Left ventricle myocardium superior (tissue), 1 donor: ENCODE measurements at regions of chr11 and their contacts with region 1.

Region 1: GRCh38 chr11:41461057-41461681 is 1.7 kb upstream of the LRRC4C start:
- DNase-seq: no peak
- ATAC-seq: no peak

Region 2: DNA sequence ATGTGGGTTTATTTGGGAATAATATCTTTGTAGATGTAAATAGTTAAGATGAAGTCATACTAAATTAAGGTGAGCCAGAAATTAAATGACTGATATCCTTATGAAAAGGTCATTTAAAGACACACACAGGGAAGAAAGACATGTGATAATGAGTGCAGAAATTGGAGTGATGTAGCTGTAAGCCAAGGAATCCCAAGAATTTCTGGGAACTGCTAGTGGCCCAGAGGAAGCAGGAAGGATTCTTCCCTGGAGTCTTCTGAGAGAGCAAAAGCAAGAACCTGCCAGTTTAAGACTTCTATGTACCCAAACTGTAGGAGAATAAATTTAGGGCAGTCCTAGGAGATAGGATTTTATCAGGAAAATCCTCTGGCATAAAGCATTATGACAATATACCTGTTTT is 68.6 kb before region 1 on chr11:
- intact Hi-C with region 1: no loop called
- DNase-seq: no peak
- ATAC-seq: no peak

Region 3: GRCh38 chr11:42524534-42525227 is 1063.5 kb after region 1 on chr11:
- intact Hi-C with region 1: loop called (anchors 10 kb)
- DNase-seq: no peak
- ATAC-seq: peak; percentile 58